H1 (cell line): ENCODE measurements at regions of chr16 and their contacts with region 1.

Region 1: DNA sequence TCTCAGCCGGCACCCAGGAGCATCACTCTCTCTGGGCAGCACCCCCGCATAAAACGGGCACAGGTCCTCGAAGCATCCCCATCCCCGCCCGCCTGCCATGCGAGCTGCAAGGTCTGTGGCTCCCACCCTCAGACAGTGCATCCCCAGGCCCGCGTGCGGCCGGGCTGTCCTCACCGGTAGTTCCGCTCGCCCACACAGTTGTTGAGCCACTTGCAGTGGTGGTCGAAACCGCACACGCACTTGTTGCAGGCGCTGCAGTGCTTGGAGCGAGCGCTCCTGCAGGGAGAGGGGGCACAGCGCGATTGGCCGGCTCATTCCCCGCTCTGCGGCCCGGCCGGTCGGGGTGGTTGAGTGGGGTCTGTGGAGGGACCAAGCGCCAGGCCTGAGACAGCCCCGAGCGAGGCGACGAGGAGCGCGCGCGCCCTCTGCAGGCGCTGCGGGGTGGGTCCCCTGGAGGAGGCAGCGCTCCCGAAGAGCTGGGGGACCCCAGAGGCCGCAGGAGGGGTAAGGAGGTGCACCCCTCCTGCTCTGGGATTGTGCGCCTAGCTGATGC is 6.0 kb upstream of the TPPP3 start:
- DNase-seq: peak; percentile 49 to 95
- H3K4me3 ChIP-seq: no peak overlapping the region; a peak in 2 of 8 replicates
- H3K27ac ChIP-seq: no peak overlapping the region
- H3K4me1 ChIP-seq: peaks cover 0 to 30% (median 21%) of the 10 kb centered on the region in 4 experiments; a peak in 6 of 7 replicates
- H3K27me3 ChIP-seq: peaks cover 13 to 27% (median 23%) of the 10 kb centered on the region in 4 experiments
- CTCF ChIP-seq: peak in 2 of 3 experiments; percentile 86 to 96; a peak in 3 of 4 replicates
- EP300 ChIP-seq: no peak
- POLR2A ChIP-seq: no peak
- RAD21 ChIP-seq: peak; percentile 88 to 91

Region 2: GRCh38 chr16:67279296-67280089 is 119.8 kb before region 1 on chr16 and contains the start of gene PLEKHG4:
- CTCF ChIA-PET with region 1: interaction called, 55 read pairs
- POLR2A ChIA-PET with region 1: no interaction called
- DNase-seq: peak; percentile 27 to 83
- H3K4me3 ChIP-seq: peak within 1 kb of the TSS; percentile 37 to 70 (median 44)
- H3K27ac ChIP-seq: no peak within 1 kb of the TSS
- H3K4me1 ChIP-seq: 0 out of 7 replicates have a peak, but pooled peaks cover 0 to under 1% (median 0%) of the 10 kb centered on the region in 4 experiments
- H3K27me3 ChIP-seq: peaks cover 0 to 15% (median 12%) of the 10 kb centered on the region in 4 experiments; a peak in 5 of 7 replicates
- CTCF ChIP-seq: peak; percentile 78 to 98 (median 83)
- EP300 ChIP-seq: peak in 1 of 2 experiments; percentile 41; a peak in 1 of 3 replicates
- POLR2A ChIP-seq: no peak
- RAD21 ChIP-seq: peak; percentile 48 to 73
- total RNA-seq, gene PLEKHG4: 7.4 and 7.7 TPM in 2 replicates

Region 3: DNA sequence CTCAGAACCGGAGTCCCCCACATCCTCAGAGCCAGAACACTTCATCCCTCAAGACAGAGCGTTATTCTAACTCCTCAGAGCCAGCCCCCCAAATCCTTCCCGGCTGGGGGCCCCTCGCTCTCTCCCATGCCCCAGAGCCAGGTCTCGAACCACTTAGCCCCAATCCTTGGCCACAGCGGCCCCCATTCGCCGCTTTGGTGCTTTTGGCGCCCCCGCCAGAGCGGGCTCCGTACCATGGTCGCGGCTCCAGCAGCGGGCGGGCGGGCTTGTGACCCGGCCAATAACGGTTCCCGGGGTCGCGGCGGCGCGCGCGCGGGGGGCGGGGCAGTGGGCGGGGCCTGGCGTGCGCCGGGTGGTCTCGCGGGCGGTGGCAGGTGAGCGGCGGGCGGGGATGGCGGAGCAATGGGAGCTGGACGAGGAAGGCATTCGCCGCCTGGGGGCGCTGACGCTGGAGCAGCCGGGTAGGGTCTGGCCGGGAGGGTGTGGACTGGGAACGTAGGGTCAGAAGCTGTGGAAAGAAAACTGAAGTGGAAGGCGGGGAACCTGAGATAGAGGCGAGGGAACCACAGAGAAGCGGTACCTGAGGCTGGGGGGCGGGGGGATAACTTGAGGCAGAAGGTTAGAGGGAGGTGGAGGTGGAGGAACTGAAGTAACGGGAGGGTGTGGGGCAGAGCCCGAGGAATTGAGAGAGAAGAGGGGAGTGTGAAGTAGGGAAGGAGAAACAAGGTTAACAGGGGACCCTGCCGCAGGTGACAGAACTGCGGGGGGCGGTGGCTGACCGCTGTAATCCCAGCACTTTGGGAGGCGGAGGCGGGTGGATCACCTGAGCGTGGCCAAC is 72.6 kb before region 1 on chr16 and contains the starts of genes KCTD19 and LRRC36:
- CTCF ChIA-PET with region 1: interaction called, 19 read pairs
- POLR2A ChIA-PET with region 1: no interaction called
- DNase-seq: peak; percentile 73 to 100
- H3K4me3 ChIP-seq: peak within 1 kb of the TSS; percentile 36 to 68 (median 52)
- H3K27ac ChIP-seq: no peak within 1 kb of the TSS
- H3K4me1 ChIP-seq: no peaks in the 10 kb centered on the region; a peak in 1 of 7 replicates
- H3K27me3 ChIP-seq: peaks cover 0 to 4% (median under 1%) of the 10 kb centered on the region in 4 experiments; a peak in 3 of 7 replicates
- CTCF ChIP-seq: peak; percentile 75 to 90 (median 78)
- EP300 ChIP-seq: no peak
- POLR2A ChIP-seq: no peak
- RAD21 ChIP-seq: peak; percentile 53 to 59
- total RNA-seq, gene KCTD19: 0.06 and 0.63 TPM in 2 replicates
- total RNA-seq, gene LRRC36: 0.44 TPM in 1 of 2 replicates, not detected in the other

Region 4: DNA sequence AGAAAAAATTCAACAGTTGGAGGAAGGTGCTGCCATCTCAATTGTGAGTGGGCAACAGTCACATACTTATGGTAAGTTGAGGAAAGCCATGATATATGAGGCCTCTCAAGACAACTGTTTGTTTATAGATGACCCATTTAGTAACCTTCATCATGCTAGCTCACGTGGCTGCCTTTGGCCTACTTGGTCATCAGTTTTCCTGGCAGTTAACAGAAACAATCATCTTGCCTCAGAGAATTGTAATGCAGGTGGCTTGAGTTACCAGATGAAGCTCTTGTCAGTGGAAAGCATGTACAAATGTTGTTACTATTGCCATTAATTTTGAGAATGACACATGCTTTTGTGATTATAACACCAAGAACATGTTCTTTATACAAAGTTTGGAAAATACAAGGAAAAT is 20.6 kb before region 1 on chr16:
- CTCF ChIA-PET with region 1: interaction called, 26 read pairs
- POLR2A ChIA-PET with region 1: no interaction called
- DNase-seq: no peak
- H3K4me3 ChIP-seq: no peak overlapping the region
- H3K27ac ChIP-seq: no peak overlapping the region
- H3K4me1 ChIP-seq: no peaks in the 10 kb centered on the region
- H3K27me3 ChIP-seq: no peaks in the 10 kb centered on the region; a peak in 1 of 7 replicates
- CTCF ChIP-seq: no peak
- EP300 ChIP-seq: no peak
- POLR2A ChIP-seq: no peak
- RAD21 ChIP-seq: no peak

Region 5: DNA sequence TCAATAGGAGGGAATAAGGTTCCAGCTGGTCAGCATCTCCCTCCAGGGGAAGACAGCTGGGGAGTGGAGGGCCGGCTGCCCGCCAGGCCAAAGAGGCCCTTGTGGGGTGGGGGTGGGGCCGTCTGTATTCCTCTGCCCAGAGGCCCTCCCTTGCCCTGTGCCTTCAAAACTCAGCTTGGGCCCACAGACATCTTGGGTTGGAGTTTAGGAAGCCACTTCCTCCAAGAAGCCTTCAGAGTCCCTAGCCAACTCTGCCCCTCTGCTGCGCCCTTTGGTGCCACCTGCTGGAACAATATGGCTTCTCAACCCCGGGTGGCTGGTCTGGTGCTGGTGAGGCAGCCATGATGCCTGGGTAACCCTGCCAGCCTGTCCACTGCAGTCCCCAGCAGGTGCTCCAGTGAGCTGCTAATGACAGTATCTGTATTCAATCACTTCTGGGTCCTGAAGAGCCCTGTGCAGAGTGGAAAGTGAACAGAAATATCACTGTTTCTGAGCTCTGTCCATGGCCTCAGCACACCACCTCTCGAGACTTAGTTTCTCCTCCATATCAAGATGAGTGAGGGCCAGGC is 48.3 kb after region 1 on chr16:
- CTCF ChIA-PET with region 1: interaction called, 10 read pairs
- POLR2A ChIA-PET with region 1: no interaction called
- DNase-seq: peak in 1 of 2 experiments; percentile 77
- H3K4me3 ChIP-seq: no peak overlapping the region
- H3K27ac ChIP-seq: no peak overlapping the region
- H3K4me1 ChIP-seq: peaks cover 0 to 8% (median 4%) of the 10 kb centered on the region in 4 experiments; a peak in 5 of 7 replicates
- H3K27me3 ChIP-seq: no peaks in the 10 kb centered on the region
- CTCF ChIP-seq: peak; percentile 57 to 63 (median 59)
- EP300 ChIP-seq: no peak
- POLR2A ChIP-seq: no peak
- RAD21 ChIP-seq: peak; percentile 40 to 66; a peak in 3 of 4 replicates

Region 6: GRCh38 chr16:67471758-67472384 is 72.6 kb after region 1 on chr16:
- CTCF ChIA-PET with region 1: no interaction called
- POLR2A ChIA-PET with region 1: no interaction called
- DNase-seq: no peak
- H3K4me3 ChIP-seq: no peak overlapping the region
- H3K27ac ChIP-seq: no peak overlapping the region
- H3K4me1 ChIP-seq: no peaks in the 10 kb centered on the region
- H3K27me3 ChIP-seq: no peaks in the 10 kb centered on the region
- CTCF ChIP-seq: no peak
- EP300 ChIP-seq: no peak
- POLR2A ChIP-seq: no peak
- RAD21 ChIP-seq: no peak

Region 7: GRCh38 chr16:67542464-67543435 is 143.5 kb after region 1 on chr16:
- CTCF ChIA-PET with region 1: no interaction called
- POLR2A ChIA-PET with region 1: no interaction called
- DNase-seq: peak in 1 of 2 experiments; percentile 52
- H3K4me3 ChIP-seq: no peak overlapping the region
- H3K27ac ChIP-seq: no peak overlapping the region
- H3K4me1 ChIP-seq: peaks cover 0 to 15% (median 7%) of the 10 kb centered on the region in 4 experiments; a peak in 5 of 7 replicates
- H3K27me3 ChIP-seq: peaks cover 21 to 39% (median 39%) of the 10 kb centered on the region in 4 experiments
- CTCF ChIP-seq: no peak
- EP300 ChIP-seq: no peak
- POLR2A ChIP-seq: no peak
- RAD21 ChIP-seq: no peak